ENCODE measurements at regions of chr14 and their contacts with region 1.

Region 1: GRCh38 chr14:91323671-91324605 is 79.4 kb upstream of the GPR68 start:
- DNase-seq: peak; percentile 93
- H3K4me3 ChIP-seq: no peak overlapping the region
- H3K27ac ChIP-seq: peak overlapping the region; percentile 82
- H3K4me1 ChIP-seq: peaks cover 53% of the 10 kb centered on the region
- H3K27me3 ChIP-seq: no peaks in the 10 kb centered on the region
- CTCF ChIP-seq: peak; percentile 84 to 93
- POLR2A ChIP-seq: no peak

Region 2: GRCh38 chr14:91060351-91061055 is 263.4 kb before region 1 on chr14 and contains the start of gene RPS6KA5:
- CTCF ChIA-PET with region 1: no interaction called
- POLR2A ChIA-PET with region 1: no interaction called
- dilution Hi-C with region 1: no loop called
- intact Hi-C with region 1: loop called (anchors 1 kb)
- DNase-seq: peak; percentile 100
- H3K4me3 ChIP-seq: peak within 1 kb of the TSS; percentile 68 to 100 (median 71)
- H3K27ac ChIP-seq: peak within 1 kb of the TSS; percentile 75
- H3K4me1 ChIP-seq: peaks cover 22% of the 10 kb centered on the region
- H3K27me3 ChIP-seq: no peaks in the 10 kb centered on the region
- CTCF ChIP-seq: no peak
- POLR2A ChIP-seq: peak; percentile 41
- total RNA-seq, gene RPS6KA5: 5.4 and 8.8 TPM in 2 replicates

Region 3: DNA sequence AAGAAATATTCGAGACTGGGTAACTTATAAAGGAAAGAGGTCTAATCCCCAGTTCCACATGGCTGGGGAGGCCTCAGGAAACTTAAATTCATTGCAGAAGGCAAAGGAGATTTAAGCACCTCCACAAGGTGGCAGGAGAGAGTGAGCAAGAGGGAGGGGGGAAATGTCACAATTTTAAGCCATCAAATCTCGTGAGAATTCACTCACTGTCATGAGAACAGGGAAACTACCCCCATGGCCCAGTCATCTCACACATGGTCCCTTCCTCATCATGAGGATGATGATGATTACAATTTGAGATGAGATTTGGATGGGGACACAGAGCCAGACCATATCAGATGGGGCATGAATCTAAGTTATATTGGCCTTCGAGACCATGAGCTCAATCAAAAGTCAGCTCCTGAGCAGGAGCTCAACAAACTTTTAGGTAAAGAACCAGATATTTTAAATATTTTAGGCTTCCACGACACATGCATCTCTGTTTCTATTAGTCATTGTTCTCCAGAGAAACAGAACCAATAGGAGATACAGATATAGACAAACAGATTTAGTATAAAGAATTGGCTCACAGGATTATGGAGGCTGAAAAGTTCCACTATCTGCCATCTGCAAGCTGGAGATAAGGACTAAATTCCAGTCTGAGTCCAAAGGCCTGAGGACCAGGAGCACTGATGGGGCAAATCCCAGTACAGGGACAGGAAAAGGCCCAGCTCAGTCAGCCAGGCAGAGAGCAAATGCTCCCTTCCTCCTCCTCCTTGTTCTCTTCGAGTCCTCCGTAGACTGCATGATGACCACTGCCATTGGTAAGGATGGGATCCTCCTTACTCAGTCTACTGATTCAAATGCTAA is 185.2 kb before region 1 on chr14:
- CTCF ChIA-PET with region 1: no interaction called
- POLR2A ChIA-PET with region 1: no interaction called
- dilution Hi-C with region 1: no loop called
- intact Hi-C with region 1: no loop called
- DNase-seq: peak; percentile 82
- H3K4me3 ChIP-seq: no peak overlapping the region
- H3K27ac ChIP-seq: no peak overlapping the region
- H3K4me1 ChIP-seq: peaks cover 22% of the 10 kb centered on the region
- H3K27me3 ChIP-seq: no peaks in the 10 kb centered on the region
- CTCF ChIP-seq: peak; percentile 45 to 52
- POLR2A ChIP-seq: no peak

Region 4: GRCh38 chr14:91346851-91347199 is 22.9 kb after region 1 on chr14:
- CTCF ChIA-PET with region 1: interaction called, 11 read pairs
- POLR2A ChIA-PET with region 1: no interaction called
- dilution Hi-C with region 1: no loop called
- intact Hi-C with region 1: loop called (anchors 1 kb)
- DNase-seq: no peak
- H3K4me3 ChIP-seq: no peak overlapping the region
- H3K27ac ChIP-seq: no peak overlapping the region
- H3K4me1 ChIP-seq: peaks cover 13% of the 10 kb centered on the region
- H3K27me3 ChIP-seq: no peaks in the 10 kb centered on the region
- CTCF ChIP-seq: no peak
- POLR2A ChIP-seq: no peak

Region 5: DNA sequence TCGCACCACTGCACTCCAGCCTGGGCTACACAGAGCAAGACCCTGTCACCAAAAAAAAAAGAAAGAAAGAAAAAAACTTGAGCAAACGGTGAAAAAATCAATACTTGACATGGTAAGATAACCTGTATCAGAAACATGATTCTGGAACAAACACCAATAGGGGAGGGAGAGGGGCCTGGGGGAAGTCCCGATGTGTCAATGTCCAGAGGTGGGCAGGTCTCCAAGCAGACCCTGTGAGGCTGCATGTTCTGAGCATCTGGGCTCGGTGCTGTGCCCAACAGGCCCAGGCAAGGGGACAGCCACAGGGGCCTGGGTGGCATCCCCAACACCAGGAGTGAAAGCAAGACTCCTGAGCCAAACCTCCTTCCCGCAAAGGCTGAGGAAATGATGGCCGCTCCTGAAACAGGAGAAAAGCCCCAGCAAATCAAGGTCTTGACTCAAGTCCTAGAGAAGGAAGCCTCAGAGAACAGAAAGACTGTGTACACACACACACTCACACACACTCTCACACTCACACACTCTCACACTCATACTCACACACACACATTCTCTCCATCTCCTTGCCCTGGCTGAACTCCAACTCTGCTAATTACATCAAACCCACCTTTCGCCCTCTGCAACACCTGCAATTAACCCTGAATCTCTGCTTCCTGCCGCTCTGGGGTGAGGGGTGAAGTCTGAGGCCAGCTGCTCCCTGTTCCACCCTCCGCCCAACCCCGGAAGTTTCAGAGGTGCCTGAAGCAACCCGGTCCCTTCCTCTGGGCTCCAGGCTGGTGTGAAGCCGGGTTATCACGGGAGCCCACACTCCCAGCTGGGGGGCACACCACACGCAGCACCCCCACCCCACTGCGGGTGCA is 73.2 kb after region 1 on chr14:
- CTCF ChIA-PET with region 1: interaction called, 32 read pairs
- POLR2A ChIA-PET with region 1: no interaction called
- dilution Hi-C with region 1: no loop called
- intact Hi-C with region 1: no loop called
- DNase-seq: peak; percentile 17
- H3K4me3 ChIP-seq: no peak overlapping the region
- H3K27ac ChIP-seq: no peak overlapping the region
- H3K4me1 ChIP-seq: peaks cover 29% of the 10 kb centered on the region
- H3K27me3 ChIP-seq: no peaks in the 10 kb centered on the region
- CTCF ChIP-seq: no peak
- POLR2A ChIP-seq: no peak

Region 6: DNA sequence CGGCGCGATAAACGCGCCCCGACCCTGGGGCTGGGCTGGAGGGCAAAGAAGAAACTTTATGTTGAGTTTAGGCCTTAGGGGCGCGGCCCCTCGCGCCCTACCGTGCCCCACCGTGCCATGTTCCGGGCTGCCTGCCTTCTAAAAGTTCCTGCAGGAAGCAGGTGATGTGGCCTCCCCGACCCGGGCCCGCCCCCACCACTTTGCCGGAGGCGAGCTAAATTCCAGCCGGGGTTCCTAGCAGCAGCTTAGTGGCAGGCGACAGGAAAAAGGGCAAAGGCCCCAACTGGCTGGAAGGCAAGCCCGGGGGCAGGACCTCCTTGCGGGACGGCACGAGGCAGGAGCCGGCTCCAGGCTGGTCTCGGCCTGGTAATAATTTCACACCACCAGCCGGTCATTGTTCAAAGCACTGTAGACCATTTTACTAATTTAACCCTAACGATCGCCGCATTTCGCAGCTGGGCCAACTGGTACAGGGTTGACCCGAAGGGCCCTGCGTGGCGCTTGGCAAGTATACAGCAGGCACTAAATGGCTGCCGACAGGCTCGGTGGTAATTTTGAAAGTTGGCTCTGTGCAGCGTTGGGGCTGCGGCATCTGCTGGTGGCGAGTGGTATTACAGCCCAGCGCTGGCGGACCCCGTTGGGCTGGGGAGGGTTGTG is 94.6 kb after region 1 on chr14:
- CTCF ChIA-PET with region 1: interaction called, 196 read pairs
- POLR2A ChIA-PET with region 1: interaction called, 3 read pairs
- dilution Hi-C with region 1: no loop called
- intact Hi-C with region 1: loop called (anchors 1 kb)
- DNase-seq: peak; percentile 67
- H3K4me3 ChIP-seq: peak overlapping the region in 1 of 3 experiments; percentile 73
- H3K27ac ChIP-seq: no peak overlapping the region
- H3K4me1 ChIP-seq: peaks cover 25% of the 10 kb centered on the region
- H3K27me3 ChIP-seq: no peaks in the 10 kb centered on the region
- CTCF ChIP-seq: peak; percentile 94 to 96
- POLR2A ChIP-seq: no peak

Region 7: GRCh38 chr14:91466192-91466591 is 142.3 kb after region 1 on chr14:
- CTCF ChIA-PET with region 1: no interaction called
- POLR2A ChIA-PET with region 1: no interaction called
- dilution Hi-C with region 1: no loop called
- intact Hi-C with region 1: no loop called
- DNase-seq: no peak
- H3K4me3 ChIP-seq: no peak overlapping the region
- H3K27ac ChIP-seq: no peak overlapping the region
- H3K4me1 ChIP-seq: no peaks in the 10 kb centered on the region
- H3K27me3 ChIP-seq: no peaks in the 10 kb centered on the region
- CTCF ChIP-seq: no peak
- POLR2A ChIP-seq: no peak

Region 8: DNA sequence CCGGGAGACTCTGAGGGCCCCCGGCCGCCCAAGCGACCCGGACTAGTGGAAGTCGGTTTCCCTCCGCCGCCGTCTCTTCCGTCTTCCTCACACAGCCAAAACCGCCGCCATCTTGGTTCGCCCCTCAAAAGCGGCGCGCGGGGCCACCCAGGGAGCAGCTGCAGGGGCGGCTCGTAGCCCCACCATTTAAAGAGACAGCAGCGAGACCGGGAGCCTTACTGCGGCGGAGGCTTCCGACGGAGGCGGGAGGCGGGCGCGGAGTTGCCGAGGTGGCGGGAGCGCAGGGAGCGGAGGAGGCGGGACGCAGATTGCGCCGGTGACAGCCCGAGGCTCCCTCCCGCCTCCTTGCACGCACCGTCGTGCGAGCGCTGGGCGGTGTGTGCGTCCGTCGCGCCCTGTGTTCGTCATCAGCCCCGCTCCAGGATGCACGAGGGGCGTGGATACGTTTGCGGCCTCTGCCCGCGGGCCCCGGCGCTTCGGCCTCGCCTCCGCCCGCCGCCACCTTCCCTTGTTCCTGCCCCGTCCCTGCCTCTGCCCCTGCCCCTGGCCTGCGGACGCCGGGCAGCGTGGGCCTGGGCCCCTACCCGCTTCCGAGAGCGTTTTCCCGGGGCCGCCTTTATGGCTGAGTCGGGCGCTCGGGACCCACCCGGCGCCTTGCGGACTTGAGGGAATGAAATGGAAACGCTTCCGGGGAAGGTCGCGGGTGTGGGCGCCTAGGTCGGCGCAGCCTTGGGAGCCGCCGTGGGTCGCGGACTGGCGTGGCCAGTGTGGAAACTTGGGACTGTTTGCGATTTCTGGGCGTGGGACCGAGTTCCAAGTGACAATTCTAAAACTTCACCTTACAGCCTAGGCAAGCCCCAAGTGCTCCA is 186.5 kb after region 1 on chr14 and contains the start of gene PPP4R3A:
- CTCF ChIA-PET with region 1: no interaction called
- POLR2A ChIA-PET with region 1: no interaction called
- dilution Hi-C with region 1: no loop called
- intact Hi-C with region 1: loop called (anchors 1 kb)
- DNase-seq: peak; percentile 96
- H3K4me3 ChIP-seq: peak within 1 kb of the TSS; percentile 56 to 97 (median 85)
- H3K27ac ChIP-seq: peak within 1 kb of the TSS; percentile 83
- H3K4me1 ChIP-seq: peaks cover 17% of the 10 kb centered on the region
- H3K27me3 ChIP-seq: no peaks in the 10 kb centered on the region
- CTCF ChIP-seq: no peak
- POLR2A ChIP-seq: peak; percentile 89
- total RNA-seq, gene PPP4R3A: 77.0 and 83.5 TPM in 2 replicates